ENCODE measurements at regions of chr1 and their contacts with region 1.

Region 1: DNA sequence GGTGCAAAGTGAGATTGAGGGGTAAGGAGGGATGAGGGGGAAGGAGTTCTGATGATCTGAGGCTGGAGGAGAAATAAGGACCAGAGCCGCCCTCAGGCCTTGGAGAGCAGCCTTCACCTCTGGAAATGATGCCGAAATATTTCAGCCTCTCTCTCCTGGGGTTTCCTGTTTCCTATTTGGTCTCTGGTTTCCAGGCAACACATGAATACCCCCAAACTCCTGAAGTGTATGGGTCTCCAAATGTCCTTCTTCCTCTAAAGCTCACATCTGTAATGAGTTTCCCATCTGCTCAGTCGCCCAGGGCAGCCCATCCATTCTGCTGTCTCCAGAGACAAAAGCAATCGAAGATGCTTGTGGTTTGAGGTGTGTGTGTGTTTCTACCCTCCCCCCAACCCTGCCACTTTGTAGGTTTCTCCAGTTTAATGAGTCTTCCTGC is 52.0 kb upstream of the FAM20B start:
- DNase-seq: no peak
- ATAC-seq: no peak
- H3K4me3 ChIP-seq: no peak overlapping the region
- H3K27ac ChIP-seq: no peak overlapping the region
- H3K4me1 ChIP-seq: no peaks in the 10 kb centered on the region
- CTCF ChIP-seq: no peak
- EP300 ChIP-seq: no peak
- POLR2A ChIP-seq: no peak
- RAD21 ChIP-seq: no peak

Region 2: GRCh38 chr1:178908358-178908757 is 65.3 kb before region 1 on chr1:
- CTCF ChIA-PET with region 1: no interaction called
- POLR2A ChIA-PET with region 1: no interaction called
- DNase-seq: no peak
- ATAC-seq: no peak
- H3K4me3 ChIP-seq: no peak overlapping the region
- H3K27ac ChIP-seq: no peak overlapping the region
- H3K4me1 ChIP-seq: no peaks in the 10 kb centered on the region
- CTCF ChIP-seq: no peak
- EP300 ChIP-seq: no peak
- POLR2A ChIP-seq: no peak
- RAD21 ChIP-seq: no peak

Region 3: GRCh38 chr1:178953034-178953433 is 20.6 kb before region 1 on chr1:
- CTCF ChIA-PET with region 1: interaction called, 3 read pairs
- POLR2A ChIA-PET with region 1: interaction called, 10 read pairs
- DNase-seq: no peak
- ATAC-seq: no peak
- H3K4me3 ChIP-seq: no peak overlapping the region
- H3K27ac ChIP-seq: no peak overlapping the region
- H3K4me1 ChIP-seq: no peaks in the 10 kb centered on the region
- CTCF ChIP-seq: no peak
- EP300 ChIP-seq: no peak
- POLR2A ChIP-seq: no peak
- RAD21 ChIP-seq: no peak